Mucosa of descending colon (tissue), 3 donors: ENCODE measurements at regions of chr9 and their contacts with region 1.

Region 1: GRCh38 chr9:126558051-126558665 is 55.6 kb upstream of the LMX1B start:
- DNase-seq: peak in 2 of 3 donors; percentile 72 to 74
- ATAC-seq: peak; percentile 97
- H3K4me3 ChIP-seq: no peak overlapping the region
- H3K4me1 ChIP-seq: no peaks in the 10 kb centered on the region
- CTCF ChIP-seq: peak; percentile 97

Region 2: DNA sequence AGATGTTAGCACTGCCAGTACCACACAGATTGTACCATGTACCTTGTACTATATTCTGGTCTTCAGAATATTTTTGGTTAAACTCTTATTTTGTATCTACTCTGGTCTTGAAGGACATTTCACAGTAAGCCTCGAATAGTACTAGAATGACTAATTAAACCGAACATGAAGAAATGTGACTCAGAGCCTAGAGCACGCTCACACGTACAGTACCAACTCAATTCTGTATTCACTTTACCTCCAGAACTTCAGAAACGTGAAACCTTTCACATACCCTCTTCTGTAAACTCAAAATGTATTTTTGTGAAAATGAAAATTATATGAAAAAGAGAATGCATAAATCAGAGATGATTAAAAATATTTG is 118.8 kb before region 1 on chr9:
- intact Hi-C with region 1: no loop called
- DNase-seq: no peak
- ATAC-seq: no peak
- H3K4me3 ChIP-seq: no peak overlapping the region
- H3K4me1 ChIP-seq: no peaks in the 10 kb centered on the region
- CTCF ChIP-seq: no peak

Region 3: GRCh38 chr9:126500684-126501382 is 57.3 kb before region 1 on chr9:
- intact Hi-C with region 1: loop called (anchors 2 to 10 kb)
- DNase-seq: peak; percentile 65 to 74 (median 72)
- ATAC-seq: peak; percentile 73
- H3K4me3 ChIP-seq: no peak overlapping the region
- H3K4me1 ChIP-seq: no peaks in the 10 kb centered on the region
- CTCF ChIP-seq: peak; percentile 96